Aorta (tissue), 5 donors: ENCODE measurements at regions of chr6 and their contacts with region 1.

Region 1: DNA sequence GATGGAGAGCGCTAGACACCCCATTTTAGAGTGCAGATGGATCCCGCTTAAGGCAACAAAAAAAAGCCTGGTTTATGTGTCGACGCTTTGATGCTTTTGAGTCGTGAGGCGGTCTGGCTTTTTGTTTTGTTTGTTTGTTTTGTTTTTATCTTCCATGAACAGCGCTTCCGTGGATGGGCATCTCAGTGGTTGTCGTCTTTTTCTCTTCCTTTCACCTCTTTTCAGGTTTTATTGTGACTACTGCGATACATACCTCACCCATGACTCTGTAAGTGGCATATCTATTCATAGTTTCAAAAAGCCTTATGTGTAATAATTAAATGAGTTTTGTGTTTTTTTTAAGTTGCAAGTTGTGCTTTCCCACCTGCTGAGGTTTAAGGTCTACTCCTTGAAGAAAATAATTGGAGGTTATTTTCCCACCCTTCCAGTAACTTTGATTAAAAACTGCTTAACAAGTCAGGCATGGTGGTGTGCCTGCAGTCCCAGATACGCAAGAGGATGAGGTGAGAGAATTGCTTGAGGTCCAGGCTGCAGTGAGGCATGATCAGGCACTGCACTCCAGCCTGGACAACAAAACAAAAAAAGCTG is 476 bp downstream of the SNRPC start:
- DNase-seq: no peak
- ATAC-seq: no peak
- H3K4me3 ChIP-seq: peak overlapping the region; percentile 75 to 76
- H3K27ac ChIP-seq: peak overlapping the region; percentile 33 to 80
- H3K4me1 ChIP-seq: no peaks in the 10 kb centered on the region
- H3K27me3 ChIP-seq: no peaks in the 10 kb centered on the region

Region 2: DNA sequence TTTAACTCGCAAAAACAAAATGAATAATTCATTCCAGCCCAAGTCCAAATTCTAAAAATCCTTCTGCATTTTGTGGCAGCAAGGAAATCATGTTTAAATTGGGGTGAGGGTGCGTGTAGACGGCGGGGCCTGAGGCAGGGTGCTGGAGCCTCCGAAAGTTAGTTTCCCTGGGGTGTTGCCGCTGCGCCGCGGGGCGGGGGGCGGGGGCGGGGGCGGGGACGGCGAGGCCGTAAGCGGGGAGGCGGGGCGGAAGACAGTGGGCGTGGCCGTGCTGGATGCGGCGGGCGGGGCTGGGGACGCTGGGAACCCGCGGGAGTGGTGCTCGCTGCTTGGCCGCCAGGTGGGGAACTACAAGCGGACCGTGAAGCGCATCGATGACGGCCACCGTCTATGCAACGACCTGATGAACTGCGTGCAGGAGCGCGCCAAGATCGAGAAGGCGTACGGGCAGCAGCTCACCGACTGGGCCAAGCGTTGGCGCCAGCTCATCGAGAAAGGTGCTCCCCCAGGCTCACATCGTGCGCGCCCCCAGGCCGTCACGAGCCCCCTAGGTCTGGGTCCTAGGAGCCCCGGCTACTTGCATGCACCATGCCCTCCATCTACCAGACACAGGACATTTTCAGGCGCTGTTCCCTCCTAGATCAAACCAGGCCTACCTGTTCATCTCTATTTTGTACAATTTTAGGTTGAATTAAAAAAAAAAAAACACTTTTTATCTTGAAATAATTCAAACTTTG is 230.6 kb before region 1 on chr6:
- intact Hi-C with region 1: loop called in 1 of 2 experiments (anchors 5 kb)
- DNase-seq: peak; percentile 96 to 99
- ATAC-seq: peak; percentile 94
- H3K4me3 ChIP-seq: no peak overlapping the region
- H3K27ac ChIP-seq: no peak overlapping the region
- H3K4me1 ChIP-seq: no peaks in the 10 kb centered on the region
- H3K27me3 ChIP-seq: no peaks in the 10 kb centered on the region

Region 3: GRCh38 chr6:34689737-34690136 is 68.0 kb before region 1 on chr6:
- intact Hi-C with region 1: loop called in 1 of 2 experiments (anchors 5 kb)
- DNase-seq: no peak
- ATAC-seq: no peak
- H3K4me3 ChIP-seq: no peak overlapping the region
- H3K27ac ChIP-seq: no peak overlapping the region
- H3K4me1 ChIP-seq: peaks cover 0 to 4% of the 10 kb centered on the region in 2 donors
- H3K27me3 ChIP-seq: no peaks in the 10 kb centered on the region